OCI-LY7 (cell line): ENCODE measurements at regions of chr14 and their contacts with region 1.

Region 1: GRCh38 chr14:90235179-90235976 is 21.0 kb upstream of the PSMC1 start:
- DNase-seq: peak; percentile 70
- H3K4me3 ChIP-seq: peak overlapping the region; percentile 30
- H3K27ac ChIP-seq: no peak overlapping the region
- H3K4me1 ChIP-seq: peaks cover 4% of the 10 kb centered on the region
- CTCF ChIP-seq: peak; percentile 93

Region 2: GRCh38 chr14:89027097-89027740 is 1208.2 kb before region 1 on chr14:
- CTCF ChIA-PET with region 1: no interaction called
- POLR2A ChIA-PET with region 1: no interaction called
- intact Hi-C with region 1: loop called (anchors 5 kb)
- DNase-seq: peak; percentile 49
- H3K4me3 ChIP-seq: peak overlapping the region; percentile 61
- H3K27ac ChIP-seq: no peak overlapping the region
- H3K4me1 ChIP-seq: peaks cover 4% of the 10 kb centered on the region
- CTCF ChIP-seq: peak; percentile 83

Region 3: GRCh38 chr14:89936658-89937185 is 298.7 kb before region 1 on chr14:
- CTCF ChIA-PET with region 1: no interaction called
- POLR2A ChIA-PET with region 1: no interaction called
- intact Hi-C with region 1: loop called (anchors 1 kb)
- DNase-seq: no peak
- H3K4me3 ChIP-seq: no peak overlapping the region
- H3K27ac ChIP-seq: no peak overlapping the region
- H3K4me1 ChIP-seq: peaks cover 5% of the 10 kb centered on the region
- CTCF ChIP-seq: peak; percentile 60

Region 4: GRCh38 chr14:89973234-89973823 is 262.0 kb before region 1 on chr14:
- CTCF ChIA-PET with region 1: no interaction called
- POLR2A ChIA-PET with region 1: no interaction called
- intact Hi-C with region 1: loop called (anchors 1 kb)
- DNase-seq: peak; percentile 58
- H3K4me3 ChIP-seq: no peak overlapping the region
- H3K27ac ChIP-seq: no peak overlapping the region
- H3K4me1 ChIP-seq: no peaks in the 10 kb centered on the region
- CTCF ChIP-seq: peak; percentile 94

Region 5: DNA sequence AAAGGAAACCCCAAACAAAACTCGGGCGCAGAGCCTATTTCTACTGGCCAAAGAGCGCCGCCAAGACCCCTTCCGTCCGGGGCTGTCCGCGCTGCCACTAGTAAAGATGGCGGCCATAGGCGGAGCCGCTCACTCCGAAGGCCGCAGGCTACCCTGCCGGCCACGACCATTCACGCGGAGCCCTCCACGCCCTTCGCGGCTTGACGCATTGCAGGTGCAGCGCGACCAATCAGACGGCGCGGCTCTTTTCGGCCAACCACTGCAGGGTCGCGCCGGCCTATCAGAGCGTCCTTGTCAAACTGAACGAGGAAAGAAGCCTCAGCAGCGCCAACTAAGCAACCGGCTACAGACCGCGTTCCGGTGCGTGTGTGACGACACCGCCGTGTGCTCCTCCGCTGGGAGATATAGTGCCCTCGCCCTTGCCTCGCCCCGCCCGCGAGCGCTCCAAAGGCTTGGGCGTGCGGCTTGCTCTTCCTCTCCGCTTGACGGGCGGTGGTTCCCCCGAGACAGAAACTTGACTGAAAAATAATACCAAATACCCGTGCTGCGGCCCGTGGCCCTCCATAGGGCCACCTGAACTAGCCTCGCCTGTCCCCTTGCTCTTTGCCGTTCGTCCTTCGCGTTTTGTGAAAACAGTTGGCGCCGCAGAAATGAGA is 147.8 kb after region 1 on chr14:
- CTCF ChIA-PET with region 1: no interaction called
- POLR2A ChIA-PET with region 1: no interaction called
- intact Hi-C with region 1: no loop called
- DNase-seq: peak; percentile 99
- H3K4me3 ChIP-seq: peak overlapping the region; percentile 76
- H3K27ac ChIP-seq: peak overlapping the region; percentile 79
- H3K4me1 ChIP-seq: peaks cover 29% of the 10 kb centered on the region
- CTCF ChIP-seq: 0 out of 2 replicates have a peak, but pooled peaks have one; percentile 38